Natural killer cell (primary cell): ENCODE measurements at regions of chr2 and their contacts with region 1.

Region 1: GRCh38 chr2:219597552-219598307 is at the start of gene STK11IP:
- DNase-seq: peak; percentile 87 to 94
- ATAC-seq: peak; percentile 88 to 93 (median 90)
- H3K4me3 ChIP-seq: peak within 1 kb of the TSS; percentile 95
- H3K4me3 Mint-ChIP-seq: peak within 1 kb of the TSS; percentile 96
- H3K27ac ChIP-seq: peak within 1 kb of the TSS; percentile 80
- H3K27ac Mint-ChIP-seq: peak within 1 kb of the TSS; percentile 93 to 95
- H3K4me1 ChIP-seq: peaks cover 11% of the 10 kb centered on the region
- H3K4me1 Mint-ChIP-seq: peaks cover 26 to 29% of the 10 kb centered on the region in 2 donors
- H3K27me3 ChIP-seq: no peaks in the 10 kb centered on the region
- H3K27me3 Mint-ChIP-seq: peaks cover 5 to 14% of the 10 kb centered on the region in 2 donors
- CTCF ChIP-seq: no peak
- total RNA-seq, gene STK11IP: 56.1 to 76.0 (median 65.2) TPM

Region 2: DNA sequence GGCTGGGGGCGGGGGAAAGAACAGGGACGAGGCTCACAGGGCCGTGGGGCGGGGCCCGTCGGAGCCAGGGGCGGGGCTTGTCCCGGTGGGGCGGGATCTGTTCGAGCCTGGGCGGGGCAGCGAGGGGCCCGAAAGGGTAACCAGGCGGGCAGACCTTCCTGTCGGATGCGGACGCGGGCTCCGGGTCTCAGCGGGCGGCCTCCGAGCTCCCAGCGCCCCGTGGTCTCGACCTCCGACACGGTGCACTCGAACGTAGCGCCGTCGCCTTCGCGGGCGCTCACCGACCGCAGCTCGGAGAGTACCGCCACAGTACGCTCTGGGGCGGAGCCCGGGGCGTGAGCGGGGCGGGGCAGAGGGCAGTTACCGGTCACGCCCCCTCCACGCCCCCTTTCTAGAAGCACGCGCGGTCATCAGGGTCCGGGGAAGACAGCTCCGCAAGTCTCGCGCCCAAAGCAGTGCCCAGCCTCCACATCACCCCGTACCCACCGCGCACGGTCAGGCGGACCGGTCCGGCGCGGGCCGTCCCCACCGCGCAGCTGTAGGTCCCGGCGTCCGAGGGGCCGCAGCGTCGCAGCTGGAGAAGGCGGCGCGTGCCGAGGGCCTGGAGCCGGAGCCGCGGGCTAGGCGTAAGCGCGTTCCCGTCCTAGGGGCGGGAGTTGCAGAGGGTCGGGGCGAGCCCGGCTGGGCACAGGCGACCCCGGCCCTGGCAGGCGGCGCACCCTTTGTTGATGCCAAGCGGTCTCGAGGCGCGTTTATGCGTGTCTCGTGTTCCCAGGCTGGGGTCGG is 45.2 kb before region 1 on chr2:
- intact Hi-C with region 1: loop called (anchors 2 kb)
- DNase-seq: peak; percentile 89
- ATAC-seq: peak; percentile 92 to 95 (median 94)
- H3K4me3 ChIP-seq: peak overlapping the region; percentile 32
- H3K4me3 Mint-ChIP-seq: peak overlapping the region; percentile 79
- H3K27ac ChIP-seq: no peak overlapping the region
- H3K27ac Mint-ChIP-seq: peak overlapping the region in 1 of 2 donors; percentile 87
- H3K4me1 ChIP-seq: peaks cover 20% of the 10 kb centered on the region
- H3K4me1 Mint-ChIP-seq: peaks cover 5 to 17% of the 10 kb centered on the region in 2 donors
- H3K27me3 ChIP-seq: peaks cover 28% of the 10 kb centered on the region
- H3K27me3 Mint-ChIP-seq: peaks cover 8 to 27% of the 10 kb centered on the region in 2 donors
- CTCF ChIP-seq: no peak